MCF 10A (cell line): ENCODE measurements at regions of chrX and their contacts with region 1.

Region 1: DNA sequence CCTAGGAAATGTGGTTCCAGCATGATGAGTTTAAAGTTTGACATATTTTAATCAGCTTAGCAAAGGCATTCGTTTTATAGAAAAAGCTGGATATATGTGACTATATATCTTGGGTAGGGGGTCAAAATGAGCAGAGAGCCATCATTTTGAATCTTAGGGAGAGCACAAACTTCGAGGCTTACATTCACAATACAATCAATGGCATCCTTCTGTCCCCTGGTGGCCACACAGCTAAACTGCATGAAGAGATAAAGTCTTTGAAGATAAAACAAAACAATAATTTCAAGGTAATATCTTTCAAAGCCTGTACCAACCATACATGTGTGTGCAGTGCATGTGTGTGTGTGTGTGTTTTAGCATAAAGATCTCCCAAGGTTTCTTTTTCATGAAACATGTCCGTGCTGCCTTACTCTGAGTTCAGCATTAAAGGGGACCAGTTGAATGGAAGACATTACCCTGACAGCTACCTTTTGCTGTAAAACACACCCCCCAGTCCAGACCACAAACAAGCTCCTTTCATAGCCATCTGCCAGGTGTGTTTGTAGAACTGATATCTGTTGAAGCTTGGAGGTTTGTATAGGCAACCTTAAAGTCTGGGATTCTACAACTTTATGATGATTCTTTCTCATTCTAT is 22.0 kb downstream of the DYNLT3 start:
- DNase-seq: peak; percentile 59
- H3K4me3 Mint-ChIP-seq: no peak overlapping the region
- H3K27ac Mint-ChIP-seq: no peak overlapping the region
- H3K4me1 Mint-ChIP-seq: no peaks in the 10 kb centered on the region
- H3K27me3 Mint-ChIP-seq: peaks cover 63% of the 10 kb centered on the region
- CTCF ChIP-seq: peak; percentile 88

Region 2: DNA sequence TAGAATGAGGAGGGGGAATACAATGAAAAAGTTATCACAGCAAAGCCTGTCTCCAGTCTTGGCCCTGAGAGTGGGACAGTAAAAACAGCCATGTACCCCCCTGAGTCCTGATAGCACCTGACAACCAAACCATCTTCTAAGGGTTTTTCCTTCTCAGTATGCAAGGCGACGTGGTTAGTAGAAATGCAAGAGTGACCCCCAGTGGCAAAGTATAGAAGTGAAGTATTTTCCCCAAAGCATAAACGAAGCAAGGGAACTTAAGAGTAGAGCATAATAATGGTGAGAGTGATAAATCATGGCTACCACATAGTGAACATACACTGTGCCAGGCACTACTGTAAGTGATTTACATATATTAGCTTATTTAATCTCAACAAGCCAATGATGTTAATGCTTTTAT is 764.3 kb before region 1 on chrX:
- CTCF ChIA-PET with region 1: interaction called, 3 read pairs
- POLR2A ChIA-PET with region 1: no interaction called
- intact Hi-C with region 1: loop called (anchors 5 kb)
- DNase-seq: peak; percentile 65
- H3K4me3 Mint-ChIP-seq: no peak overlapping the region
- H3K27ac Mint-ChIP-seq: no peak overlapping the region
- H3K4me1 Mint-ChIP-seq: no peaks in the 10 kb centered on the region
- H3K27me3 Mint-ChIP-seq: peaks cover 41% of the 10 kb centered on the region
- CTCF ChIP-seq: peak; percentile 46

Region 3: GRCh38 chrX:37302569-37302968 is 522.8 kb before region 1 on chrX:
- CTCF ChIA-PET with region 1: interaction called, 5 read pairs
- POLR2A ChIA-PET with region 1: interaction called, 3 read pairs
- intact Hi-C with region 1: loop called (anchors 1 kb)
- DNase-seq: peak; percentile 38
- H3K4me3 Mint-ChIP-seq: no peak overlapping the region
- H3K27ac Mint-ChIP-seq: no peak overlapping the region
- H3K4me1 Mint-ChIP-seq: no peaks in the 10 kb centered on the region
- H3K27me3 Mint-ChIP-seq: peaks cover 34% of the 10 kb centered on the region
- CTCF ChIP-seq: peak; percentile 25

Region 4: DNA sequence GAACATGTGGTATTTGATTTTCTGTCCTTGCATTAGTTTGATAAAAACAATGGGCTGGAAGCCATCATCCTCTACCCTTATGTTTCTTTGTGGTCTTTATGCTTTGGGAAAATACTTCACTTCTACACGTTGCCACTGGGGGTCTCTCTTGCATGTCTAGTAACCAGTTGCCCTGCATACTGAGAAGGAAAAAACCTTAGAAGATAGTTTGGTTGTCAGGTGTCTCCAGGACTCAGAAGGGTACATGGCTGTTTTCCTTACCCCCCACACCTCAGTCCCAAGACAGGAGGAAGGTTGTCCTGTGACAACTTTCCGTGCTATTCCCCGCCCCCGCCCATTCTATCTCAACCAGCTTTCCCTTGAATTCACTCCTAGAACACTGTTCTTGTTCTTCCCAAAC is 316.0 kb before region 1 on chrX:
- CTCF ChIA-PET with region 1: interaction called, 37 read pairs
- POLR2A ChIA-PET with region 1: no interaction called
- intact Hi-C with region 1: loop called (anchors 1 kb)
- DNase-seq: peak; percentile 22
- H3K4me3 Mint-ChIP-seq: no peak overlapping the region
- H3K27ac Mint-ChIP-seq: no peak overlapping the region
- H3K4me1 Mint-ChIP-seq: no peaks in the 10 kb centered on the region
- H3K27me3 Mint-ChIP-seq: peaks cover 80% of the 10 kb centered on the region
- CTCF ChIP-seq: peak; percentile 53

Region 5: DNA sequence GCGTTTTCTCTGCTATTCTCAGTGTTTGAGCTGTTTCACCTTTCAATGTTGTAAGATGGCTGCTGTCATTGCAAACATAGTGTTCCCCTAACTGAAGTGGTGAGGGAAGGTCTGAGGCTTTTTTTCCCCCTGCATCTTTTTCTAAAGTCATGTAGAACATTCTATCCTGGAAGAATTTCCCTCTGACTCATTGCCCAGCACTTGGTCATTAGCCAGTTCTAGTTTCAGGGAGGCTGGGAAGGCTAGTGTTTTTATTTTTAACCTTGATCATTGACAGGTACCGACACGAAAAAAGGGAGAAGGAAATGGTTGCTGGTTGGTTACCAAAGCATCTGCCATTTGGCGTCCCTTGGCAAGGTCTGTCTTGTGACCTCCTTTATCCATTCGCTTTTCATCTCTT is 247.3 kb before region 1 on chrX:
- CTCF ChIA-PET with region 1: interaction called, 19 read pairs
- POLR2A ChIA-PET with region 1: interaction called, 4 read pairs
- intact Hi-C with region 1: no loop called
- DNase-seq: peak; percentile 74
- H3K4me3 Mint-ChIP-seq: no peak overlapping the region
- H3K27ac Mint-ChIP-seq: no peak overlapping the region
- H3K4me1 Mint-ChIP-seq: peaks cover 3% of the 10 kb centered on the region
- H3K27me3 Mint-ChIP-seq: peaks cover 19% of the 10 kb centered on the region
- CTCF ChIP-seq: no peak

Region 6: GRCh38 chrX:38175140-38175539 is 349.8 kb after region 1 on chrX:
- CTCF ChIA-PET with region 1: interaction called, 5 read pairs
- POLR2A ChIA-PET with region 1: no interaction called
- intact Hi-C with region 1: loop called (anchors 2 kb)
- DNase-seq: peak; percentile 62
- H3K4me3 Mint-ChIP-seq: no peak overlapping the region
- H3K27ac Mint-ChIP-seq: peak overlapping the region; percentile 47
- H3K4me1 Mint-ChIP-seq: no peaks in the 10 kb centered on the region
- H3K27me3 Mint-ChIP-seq: peaks cover 59% of the 10 kb centered on the region
- CTCF ChIP-seq: peak; percentile 82